Ascending aorta (tissue), 2 donors: ENCODE measurements at regions of chr1 and their contacts with region 1.

Region 1: DNA sequence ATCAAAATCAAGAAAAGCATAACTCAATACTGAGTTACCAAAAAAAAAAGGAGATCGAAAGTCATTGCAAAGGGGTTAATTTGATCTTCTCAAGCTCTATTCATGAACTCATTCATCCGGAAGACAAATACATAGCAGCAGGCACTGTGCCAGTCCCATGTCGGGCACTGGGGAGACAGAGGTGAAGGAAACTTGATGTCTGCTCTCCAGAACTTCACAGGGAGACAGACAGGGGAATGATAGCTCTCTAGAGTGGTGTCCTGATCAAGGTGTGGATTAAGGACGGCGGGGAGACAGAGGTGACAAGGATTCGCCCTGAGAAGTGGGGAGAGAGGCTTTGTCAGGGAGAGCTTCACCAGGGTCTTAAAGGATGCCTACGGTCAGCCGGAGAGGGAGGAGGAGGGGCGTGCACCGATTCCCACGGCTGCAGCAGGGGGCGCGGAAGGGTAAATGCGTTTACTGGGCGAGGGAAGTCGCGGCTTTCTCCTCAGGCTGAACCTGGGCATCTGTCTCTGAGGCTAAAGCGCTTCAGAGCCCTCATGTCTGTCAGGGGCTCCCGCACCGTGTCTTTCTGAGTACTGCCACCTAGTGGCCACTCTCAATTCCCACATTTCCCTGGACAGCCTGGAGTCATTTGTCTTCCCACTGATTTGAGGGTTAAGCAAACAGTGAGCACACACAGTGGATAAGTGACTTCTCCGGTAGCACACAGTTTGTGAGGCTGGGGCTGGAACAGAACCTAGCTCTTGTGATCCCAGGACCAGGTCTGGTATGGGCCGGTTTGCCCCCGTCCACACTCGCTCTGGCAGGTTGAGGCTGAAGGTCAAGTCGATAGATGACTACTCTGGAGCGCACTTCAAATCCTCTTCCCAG is 152.8 kb downstream of the TENT5C start:
- DNase-seq: peak in 1 of 2 donors; percentile 82
- H3K4me3 ChIP-seq: peak overlapping the region; percentile 52 to 68
- H3K27ac ChIP-seq: no peak overlapping the region
- H3K4me1 ChIP-seq: no peaks in the 10 kb centered on the region
- H3K27me3 ChIP-seq: no peaks in the 10 kb centered on the region
- CTCF ChIP-seq: peak; percentile 66 to 87 (median 86)

Region 2: DNA sequence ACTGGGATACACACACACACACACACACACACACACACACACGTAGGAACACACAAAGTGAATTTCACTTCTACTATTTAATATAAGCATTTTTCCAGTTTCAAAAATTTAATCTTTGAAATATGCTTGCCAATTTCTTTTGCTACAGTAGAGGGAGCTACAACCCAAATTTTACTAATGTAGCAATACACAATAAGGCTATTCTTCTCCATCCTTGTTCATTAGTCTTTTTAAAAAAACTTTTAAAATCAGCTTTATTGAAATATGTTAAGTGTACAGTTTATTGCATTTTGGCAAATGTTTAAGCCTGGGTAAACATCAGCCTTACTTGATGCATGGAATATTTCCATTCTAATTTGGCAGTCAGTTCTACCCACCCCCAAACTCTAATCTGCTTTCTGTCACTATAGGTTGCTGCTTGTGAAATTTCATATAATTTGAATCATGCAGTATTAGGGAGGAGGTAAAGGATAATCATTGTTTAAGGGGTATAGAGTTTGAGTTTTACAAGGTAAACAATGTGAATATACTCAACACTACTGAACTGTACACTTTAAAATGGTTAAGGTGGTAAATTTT is 245.8 kb before region 1 on chr1:
- intact Hi-C with region 1: loop called (anchors 1 kb)
- DNase-seq: no peak
- H3K4me3 ChIP-seq: no peak overlapping the region
- H3K27ac ChIP-seq: no peak overlapping the region
- H3K4me1 ChIP-seq: no peaks in the 10 kb centered on the region
- H3K27me3 ChIP-seq: no peaks in the 10 kb centered on the region
- CTCF ChIP-seq: peak; percentile 37 to 62 (median 50)

Region 3: GRCh38 chr1:117534995-117535467 is 223.6 kb before region 1 on chr1:
- intact Hi-C with region 1: loop called (anchors 1 kb)
- DNase-seq: no peak
- H3K4me3 ChIP-seq: no peak overlapping the region
- H3K27ac ChIP-seq: no peak overlapping the region
- H3K4me1 ChIP-seq: no peaks in the 10 kb centered on the region
- H3K27me3 ChIP-seq: no peaks in the 10 kb centered on the region
- CTCF ChIP-seq: peak; percentile 55 to 76 (median 57)

Region 4: GRCh38 chr1:117683571-117684285 is 75.0 kb before region 1 on chr1:
- intact Hi-C with region 1: loop called (anchors 5 kb)
- DNase-seq: no peak
- H3K4me3 ChIP-seq: no peak overlapping the region
- H3K27ac ChIP-seq: peak overlapping the region in 1 of 2 donors; percentile 5
- H3K4me1 ChIP-seq: peaks cover 0 to 35% of the 10 kb centered on the region in 2 donors
- H3K27me3 ChIP-seq: no peaks in the 10 kb centered on the region
- CTCF ChIP-seq: no peak

Region 5: DNA sequence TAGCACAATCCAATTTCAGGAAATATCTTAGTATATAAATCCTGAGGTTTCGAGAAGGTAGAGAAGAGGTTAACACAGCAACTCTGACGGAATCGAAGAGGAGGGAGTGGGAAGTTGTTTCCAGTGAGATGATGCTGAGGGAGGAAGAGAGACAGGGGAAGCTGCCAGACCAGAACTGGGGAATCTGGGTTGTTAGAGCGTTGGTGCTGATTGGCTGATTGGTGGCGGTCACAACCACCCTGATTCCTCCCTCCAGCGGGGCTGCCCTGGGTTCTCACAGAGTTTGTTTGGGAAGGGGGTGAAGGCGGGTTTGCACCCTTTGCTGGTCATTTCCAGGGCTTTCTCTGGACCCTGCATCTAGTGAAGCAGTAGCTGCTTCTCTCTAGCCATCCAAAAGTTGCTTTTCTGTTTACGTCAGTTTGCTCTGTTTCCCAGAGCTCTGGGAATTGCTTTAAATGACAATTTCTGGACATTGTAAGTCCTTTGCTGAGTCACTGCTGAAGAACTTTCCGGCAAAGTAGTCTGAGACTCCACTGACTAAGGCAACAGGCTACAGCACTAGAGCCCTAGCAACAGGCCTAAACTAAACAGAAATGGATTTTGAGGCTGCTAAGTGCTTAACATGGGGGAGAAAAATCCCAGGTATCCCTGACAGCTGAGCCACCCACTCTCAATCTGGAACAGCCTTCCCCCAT is 62.7 kb before region 1 on chr1:
- intact Hi-C with region 1: loop called (anchors 5 kb)
- DNase-seq: peak in 1 of 2 donors; percentile 88
- H3K4me3 ChIP-seq: peak overlapping the region in 1 of 2 donors; percentile 52
- H3K27ac ChIP-seq: peak overlapping the region; percentile 88
- H3K4me1 ChIP-seq: peaks cover 12 to 35% of the 10 kb centered on the region in 2 donors
- H3K27me3 ChIP-seq: no peaks in the 10 kb centered on the region
- CTCF ChIP-seq: no peak

Region 6: DNA sequence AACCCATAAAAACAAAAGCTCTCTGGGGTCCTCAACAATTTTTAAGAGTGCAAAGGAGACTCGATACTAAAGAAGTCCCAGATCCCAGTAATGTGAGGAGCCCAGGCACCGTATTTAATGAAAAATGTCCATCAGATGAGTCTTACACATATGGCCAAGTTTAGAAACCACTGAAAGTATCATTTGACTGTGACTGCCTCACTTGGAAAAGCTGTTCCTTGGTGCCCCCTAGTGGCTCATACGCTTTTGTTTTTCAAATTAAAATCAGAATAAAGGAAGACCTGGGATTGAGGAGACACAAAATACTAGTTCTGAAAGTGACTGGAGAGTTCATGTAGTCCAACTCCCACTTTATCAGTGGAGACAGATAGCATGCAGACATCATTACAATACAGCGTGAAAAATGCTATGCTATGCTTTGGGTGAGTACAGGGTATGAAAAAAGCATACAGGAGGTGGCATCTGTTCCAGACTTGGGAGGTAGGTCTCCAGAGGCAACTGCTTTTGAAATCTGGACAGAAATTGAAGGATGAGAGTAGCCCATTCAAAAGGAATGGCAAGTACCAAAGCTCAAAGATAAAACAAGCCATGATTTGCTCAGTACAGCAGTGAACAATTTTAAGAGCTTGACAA is 136.9 kb after region 1 on chr1:
- intact Hi-C with region 1: loop called (anchors 2 kb)
- DNase-seq: peak in 1 of 2 donors; percentile 82
- H3K4me3 ChIP-seq: no peak overlapping the region
- H3K27ac ChIP-seq: no peak overlapping the region
- H3K4me1 ChIP-seq: no peaks in the 10 kb centered on the region
- H3K27me3 ChIP-seq: no peaks in the 10 kb centered on the region
- CTCF ChIP-seq: peak; percentile 44 to 79 (median 55)